ENCODE measurements at regions of chr1 and their contacts with region 1.

Region 1: GRCh38 chr1:147273409-147274336 is 31.2 kb downstream of the CHD1L start:
- DNase-seq: peak in 7 of 9 donors; percentile 12 to 57 (median 42)
- ATAC-seq: peak; percentile 65
- H3K4me3 ChIP-seq: no peak overlapping the region
- H3K4me3 Mint-ChIP-seq: no peak overlapping the region
- H3K27ac ChIP-seq: no peak overlapping the region
- H3K27ac Mint-ChIP-seq: no peak overlapping the region
- H3K4me1 ChIP-seq: no peaks in the 10 kb centered on the region
- H3K4me1 Mint-ChIP-seq: peaks cover 0 to 6% (median 4%) of the 10 kb centered on the region in 7 donors
- H3K27me3 ChIP-seq: no peaks in the 10 kb centered on the region
- H3K27me3 Mint-ChIP-seq: no peaks in the 10 kb centered on the region

Region 2: GRCh38 chr1:147389532-147390524 is 116.2 kb after region 1 on chr1:
- CTCF ChIA-PET with region 1: interaction called, 9 read pairs
- POLR2A ChIA-PET with region 1: no interaction called
- intact Hi-C with region 1: loop called in 1 of 2 experiments (anchors 2 kb)
- DNase-seq: peak in 6 of 9 donors; percentile 1 to 43 (median 22)
- ATAC-seq: peak; percentile 57
- H3K4me3 ChIP-seq: no peak overlapping the region
- H3K4me3 Mint-ChIP-seq: no peak overlapping the region
- H3K27ac ChIP-seq: no peak overlapping the region
- H3K27ac Mint-ChIP-seq: no peak overlapping the region
- H3K4me1 ChIP-seq: no peaks in the 10 kb centered on the region
- H3K4me1 Mint-ChIP-seq: peaks cover 0 to 6% (median 0%) of the 10 kb centered on the region in 7 donors
- H3K27me3 ChIP-seq: no peaks in the 10 kb centered on the region
- H3K27me3 Mint-ChIP-seq: peaks cover 11 to 30% (median 25%) of the 10 kb centered on the region in 5 donors

Region 3: GRCh38 chr1:147700042-147701006 is 426.7 kb after region 1 on chr1:
- CTCF ChIA-PET with region 1: no interaction called
- POLR2A ChIA-PET with region 1: no interaction called
- intact Hi-C with region 1: loop called in 1 of 2 experiments (anchors 5 kb)
- DNase-seq: peak; percentile 16 to 66 (median 58)
- ATAC-seq: peak; percentile 91
- H3K4me3 ChIP-seq: no peak overlapping the region
- H3K4me3 Mint-ChIP-seq: peak overlapping the region in 9 of 10 donors; percentile 18 to 77 (median 62)
- H3K27ac ChIP-seq: peak overlapping the region; percentile 29
- H3K27ac Mint-ChIP-seq: peak overlapping the region in 7 of 9 donors; percentile 15 to 78 (median 60)
- H3K4me1 ChIP-seq: peaks cover 0 to 7% of the 10 kb centered on the region in 2 donors
- H3K4me1 Mint-ChIP-seq: peaks cover 6 to 17% (median 15%) of the 10 kb centered on the region in 7 donors
- H3K27me3 ChIP-seq: no peaks in the 10 kb centered on the region
- H3K27me3 Mint-ChIP-seq: peaks cover 4 to 31% (median 11%) of the 10 kb centered on the region in 5 donors